T-cell (primary cell): ENCODE measurements at regions of chrX and their contacts with region 1.

Region 1: GRCh38 chrX:153708415-153708814 is 15.8 kb downstream of the BCAP31 start:
- DNase-seq: peak in 19 of 35 experiments; percentile 9 to 47 (median 28)
- ATAC-seq: peak; percentile 34 to 69 (median 52)
- H3K4me3 ChIP-seq: no peak overlapping the region
- H3K4me3 Mint-ChIP-seq: no peak overlapping the region
- H3K27ac ChIP-seq: no peak overlapping the region
- H3K27ac Mint-ChIP-seq: no peak overlapping the region
- H3K4me1 ChIP-seq: peaks cover 0 to 8% of the 10 kb centered on the region in 2 experiments
- H3K4me1 Mint-ChIP-seq: peaks cover 4 to 9% (median 5%) of the 10 kb centered on the region in 3 donors
- H3K27me3 ChIP-seq: no peaks in the 10 kb centered on the region
- H3K27me3 Mint-ChIP-seq: peaks cover 0 to 10% of the 10 kb centered on the region in 2 donors

Region 2: DNA sequence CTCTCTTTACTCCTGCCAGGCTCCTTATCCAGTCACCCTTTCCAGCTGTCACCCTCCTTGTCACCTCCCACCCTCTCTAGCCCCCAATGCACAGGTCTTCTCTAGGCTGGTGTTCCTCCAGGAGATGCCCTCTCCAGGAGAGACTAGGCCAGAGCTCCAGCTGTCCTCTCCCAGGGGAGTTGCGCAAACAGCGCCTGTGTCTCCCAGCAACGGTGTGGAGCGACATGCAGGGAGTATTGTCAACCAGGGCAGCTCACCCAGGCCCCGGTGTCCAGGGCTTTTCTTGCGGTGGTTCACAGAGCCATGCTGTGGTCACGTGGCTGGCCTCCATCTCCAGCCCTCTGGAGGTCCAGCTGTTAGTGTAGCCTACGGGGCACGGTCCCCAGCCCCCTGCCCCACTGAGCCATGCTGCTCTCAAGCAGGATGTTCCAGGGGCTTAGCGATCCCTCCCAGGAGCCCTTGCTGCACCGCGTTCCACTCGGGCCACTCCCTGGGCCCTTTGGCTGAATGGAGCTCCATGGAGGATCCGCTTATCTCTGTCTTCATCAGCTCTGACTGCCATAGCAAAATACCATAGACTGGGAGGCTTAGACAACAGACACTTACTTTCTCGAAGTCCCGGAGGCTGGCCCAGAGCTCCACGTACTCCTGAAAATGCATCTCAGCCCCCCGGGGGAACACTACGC is 144.2 kb before region 1 on chrX:
- CTCF ChIA-PET with region 1: no interaction called
- POLR2A ChIA-PET with region 1: no interaction called
- DNase-seq: no peak
- ATAC-seq: no peak
- H3K4me3 ChIP-seq: no peak overlapping the region
- H3K4me3 Mint-ChIP-seq: no peak overlapping the region
- H3K27ac ChIP-seq: no peak overlapping the region
- H3K27ac Mint-ChIP-seq: no peak overlapping the region
- H3K4me1 ChIP-seq: peaks cover 0 to 6% of the 10 kb centered on the region in 2 experiments
- H3K4me1 Mint-ChIP-seq: no peaks in the 10 kb centered on the region
- H3K27me3 ChIP-seq: peaks cover 0 to 7% of the 10 kb centered on the region in 2 experiments
- H3K27me3 Mint-ChIP-seq: peaks cover 0 to under 1% of the 10 kb centered on the region in 2 donors

Region 3: GRCh38 chrX:153687121-153688039 is 21.0 kb before region 1 on chrX and contains the start of gene SLC6A8:
- CTCF ChIA-PET with region 1: no interaction called
- POLR2A ChIA-PET with region 1: interaction called in 1 of 2 experiments, 11 read pairs
- DNase-seq: peak in 6 of 35 experiments; percentile 11 to 42 (median 24)
- ATAC-seq: peak; percentile 42 to 59 (median 46)
- H3K4me3 ChIP-seq: peak within 1 kb of the TSS in 1 of 2 donors; percentile 6
- H3K4me3 Mint-ChIP-seq: peak within 1 kb of the TSS; percentile 76 to 79 (median 77)
- H3K27ac ChIP-seq: no peak within 1 kb of the TSS
- H3K27ac Mint-ChIP-seq: no peak within 1 kb of the TSS
- H3K4me1 ChIP-seq: peaks cover 0 to 4% of the 10 kb centered on the region in 2 experiments
- H3K4me1 Mint-ChIP-seq: no peaks in the 10 kb centered on the region
- H3K27me3 ChIP-seq: peaks cover 3 to 37% of the 10 kb centered on the region in 2 experiments
- H3K27me3 Mint-ChIP-seq: peaks cover 8 to 11% of the 10 kb centered on the region in 2 donors
- total RNA-seq, gene SLC6A8: 0.89 to 2.3 (median 1.9) TPM

Region 4: DNA sequence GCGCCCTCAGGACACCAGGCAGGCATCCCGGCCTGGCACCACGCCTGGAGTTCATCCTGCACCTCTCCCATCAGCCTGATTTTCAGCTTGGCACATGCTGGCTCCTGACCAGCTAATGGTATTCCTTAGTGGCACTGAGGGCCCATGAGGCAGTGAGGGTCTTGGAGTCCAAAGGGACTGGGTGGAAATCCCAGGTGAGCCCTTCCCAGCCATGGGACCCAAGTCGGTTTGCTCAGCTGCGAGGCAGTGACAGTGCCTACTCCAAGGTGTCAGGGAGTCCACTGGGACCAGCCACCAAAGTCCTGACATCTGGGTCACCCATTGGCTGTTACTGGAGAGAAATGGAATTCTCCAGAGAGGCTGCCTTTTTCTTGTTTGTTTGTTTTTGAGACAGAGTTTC is 90.9 kb after region 1 on chrX:
- CTCF ChIA-PET with region 1: no interaction called
- POLR2A ChIA-PET with region 1: no interaction called
- DNase-seq: no peak
- ATAC-seq: no peak
- H3K4me3 ChIP-seq: no peak overlapping the region
- H3K4me3 Mint-ChIP-seq: no peak overlapping the region
- H3K27ac ChIP-seq: no peak overlapping the region
- H3K27ac Mint-ChIP-seq: no peak overlapping the region
- H3K4me1 ChIP-seq: peaks cover 0 to 29% of the 10 kb centered on the region in 2 experiments
- H3K4me1 Mint-ChIP-seq: peaks cover 16 to 18% (median 17%) of the 10 kb centered on the region in 3 donors
- H3K27me3 ChIP-seq: no peaks in the 10 kb centered on the region
- H3K27me3 Mint-ChIP-seq: no peaks in the 10 kb centered on the region